BJ (cell line): ENCODE measurements at regions of chr22 and their contacts with region 1.

Region 1: DNA sequence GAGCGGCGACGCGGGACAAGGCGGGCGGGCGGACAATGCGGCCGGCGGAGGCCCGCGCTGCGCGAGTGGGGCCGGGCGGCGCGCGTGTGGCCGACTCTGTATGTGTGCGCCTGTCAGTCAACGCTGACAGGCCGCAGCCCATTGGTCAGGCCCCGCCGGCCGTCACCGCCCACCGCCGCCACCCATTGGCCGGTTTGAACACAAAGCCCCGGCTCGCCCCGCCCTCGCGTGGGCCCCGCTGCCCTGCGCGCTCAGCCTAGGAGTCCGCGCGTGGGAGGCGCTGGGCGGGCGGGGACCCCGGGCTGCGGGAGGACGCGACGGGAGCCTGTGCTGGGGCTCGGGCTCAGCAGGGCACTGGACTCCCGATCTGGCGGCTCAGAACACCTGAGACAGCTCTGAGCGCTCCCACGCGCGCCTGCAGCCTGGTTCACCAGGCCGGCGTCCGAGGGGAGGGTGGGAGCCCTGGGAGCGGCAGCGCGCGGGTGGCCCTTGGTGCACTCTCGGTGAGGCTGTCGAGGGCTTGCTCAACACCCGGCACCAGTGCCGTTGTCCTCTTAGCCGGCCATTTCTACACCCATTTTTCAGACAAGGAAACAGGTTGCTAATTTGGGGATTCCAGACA is at the start of gene SUN2:
- DNase-seq: peak; percentile 30
- H3K4me3 ChIP-seq: peak within 1 kb of the TSS; percentile 66
- H3K27me3 ChIP-seq: no peaks in the 10 kb centered on the region
- CTCF ChIP-seq: no peak
- polyA plus RNA-seq, gene SUN2: 52.4 and 98.4 TPM in 2 replicates

Region 2: DNA sequence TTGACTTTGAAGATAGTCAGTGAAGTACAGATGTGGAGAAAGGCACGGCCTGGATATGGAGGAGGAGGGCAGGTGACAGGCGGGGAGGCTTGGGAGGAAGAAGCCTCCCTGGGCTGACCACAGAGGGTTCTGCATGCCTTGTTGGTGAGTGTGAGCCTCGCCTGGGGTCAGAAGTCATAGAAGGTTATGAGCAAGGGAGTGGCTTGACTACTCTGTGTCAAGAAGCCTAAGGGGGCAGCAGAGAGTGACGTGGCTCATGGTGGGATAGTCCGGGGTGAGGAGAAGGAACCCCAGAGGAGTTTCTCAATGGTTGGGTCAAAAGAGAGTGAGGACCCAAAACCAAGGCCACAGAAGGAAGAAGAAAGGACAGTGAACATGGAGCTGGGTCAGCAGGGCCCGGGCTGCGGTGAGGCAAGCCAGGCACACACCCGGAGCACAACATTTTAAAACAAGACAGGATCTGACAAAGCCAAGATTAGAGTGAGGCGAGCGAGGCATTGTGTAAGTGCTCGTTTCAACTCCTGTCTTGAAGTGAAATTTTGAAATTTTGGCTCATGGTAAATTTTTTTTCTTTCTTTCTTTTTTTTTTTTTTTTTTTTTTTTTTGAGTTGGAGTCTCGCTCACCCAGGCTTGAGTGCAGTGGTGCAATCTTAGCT is 456.8 kb after region 1 on chr22:
- CTCF ChIA-PET with region 1: no interaction called
- POLR2A ChIA-PET with region 1: interaction called, 13 read pairs
- DNase-seq: no peak
- H3K4me3 ChIP-seq: no peak overlapping the region
- H3K27me3 ChIP-seq: no peaks in the 10 kb centered on the region
- CTCF ChIP-seq: peak; percentile 5; the same call in 1 of the 2 replicates

Region 3: DNA sequence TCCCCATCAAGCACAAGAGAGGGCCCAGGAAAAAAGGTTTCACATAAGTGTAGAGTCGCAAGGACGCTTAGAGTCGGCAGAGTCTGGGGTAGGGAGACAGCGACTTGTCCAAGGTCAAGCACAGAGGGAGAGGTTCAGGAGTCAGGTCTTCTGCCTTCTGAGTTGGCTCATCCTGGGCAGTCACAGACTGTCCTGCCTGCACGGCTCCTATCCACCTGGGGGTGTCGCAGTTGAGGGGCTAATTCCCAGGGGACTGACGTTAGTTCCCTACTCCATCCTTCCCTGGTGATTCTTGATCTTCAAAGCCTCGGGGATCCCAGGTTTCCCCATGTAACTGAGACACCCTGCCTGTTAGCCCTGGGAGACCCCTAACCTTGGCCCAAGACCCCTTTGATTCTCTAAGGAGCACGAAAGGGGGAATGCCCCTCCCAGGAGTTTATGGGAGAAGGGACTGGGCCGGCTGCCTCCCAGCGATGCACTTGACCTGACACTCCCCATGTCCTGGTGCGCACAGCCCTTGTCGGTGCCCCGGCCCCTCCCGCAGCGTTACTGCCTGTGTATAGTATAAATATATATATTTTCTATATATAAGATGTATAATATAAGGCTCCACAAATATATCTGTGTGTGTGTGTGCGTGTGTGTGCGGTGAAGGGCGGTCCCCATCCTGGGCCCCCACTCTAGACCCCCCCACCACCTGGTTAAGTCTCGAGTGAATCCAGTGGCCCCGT is 628.9 kb after region 1 on chr22:
- CTCF ChIA-PET with region 1: no interaction called
- POLR2A ChIA-PET with region 1: no interaction called
- DNase-seq: no peak
- H3K4me3 ChIP-seq: no peak overlapping the region
- H3K27me3 ChIP-seq: no peaks in the 10 kb centered on the region
- CTCF ChIP-seq: peak; percentile 40